MCF 10A (cell line): ENCODE measurements at regions of chr20 and their contacts with region 1.

Region 1: DNA sequence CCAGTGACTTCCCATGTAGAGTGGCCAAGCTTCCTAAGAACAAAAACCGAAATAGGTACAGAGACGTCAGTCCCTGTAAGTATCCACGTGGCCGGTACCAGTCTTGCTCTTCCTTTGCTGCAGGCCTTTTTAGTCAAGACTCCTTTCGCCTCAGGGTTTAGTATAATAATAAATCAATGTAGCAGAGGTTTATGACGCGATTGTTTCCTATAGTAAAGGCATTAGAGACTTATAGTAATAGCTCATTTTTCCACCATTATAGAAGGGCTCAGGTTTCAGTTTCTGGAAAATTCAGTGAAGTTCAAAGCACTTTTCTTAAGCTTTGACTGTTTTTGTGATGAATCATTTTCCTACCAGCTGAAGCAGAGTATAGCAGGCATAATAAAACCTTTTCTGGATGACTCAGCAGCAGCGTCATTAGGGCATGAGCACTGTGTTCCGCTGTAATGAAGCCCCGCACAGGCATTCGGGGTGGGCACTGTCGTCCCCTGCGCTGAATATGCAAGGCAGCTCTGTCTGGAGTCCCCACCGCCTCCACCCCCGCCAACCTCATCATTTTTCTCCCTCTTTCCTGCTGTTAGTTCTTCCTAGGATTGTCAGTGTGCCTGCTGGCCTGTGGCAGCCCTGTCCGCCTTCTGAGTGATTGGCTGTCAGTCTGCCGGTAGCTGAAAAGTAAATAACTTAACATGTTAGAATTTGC is 51.3 kb downstream of the PTPN1 start:
- DNase-seq: peak; percentile 89
- H3K4me3 Mint-ChIP-seq: peak overlapping the region; percentile 55
- H3K27ac Mint-ChIP-seq: peak overlapping the region; percentile 97
- H3K4me1 Mint-ChIP-seq: peaks cover 47% of the 10 kb centered on the region
- H3K27me3 Mint-ChIP-seq: no peaks in the 10 kb centered on the region
- CTCF ChIP-seq: no peak

Region 2: DNA sequence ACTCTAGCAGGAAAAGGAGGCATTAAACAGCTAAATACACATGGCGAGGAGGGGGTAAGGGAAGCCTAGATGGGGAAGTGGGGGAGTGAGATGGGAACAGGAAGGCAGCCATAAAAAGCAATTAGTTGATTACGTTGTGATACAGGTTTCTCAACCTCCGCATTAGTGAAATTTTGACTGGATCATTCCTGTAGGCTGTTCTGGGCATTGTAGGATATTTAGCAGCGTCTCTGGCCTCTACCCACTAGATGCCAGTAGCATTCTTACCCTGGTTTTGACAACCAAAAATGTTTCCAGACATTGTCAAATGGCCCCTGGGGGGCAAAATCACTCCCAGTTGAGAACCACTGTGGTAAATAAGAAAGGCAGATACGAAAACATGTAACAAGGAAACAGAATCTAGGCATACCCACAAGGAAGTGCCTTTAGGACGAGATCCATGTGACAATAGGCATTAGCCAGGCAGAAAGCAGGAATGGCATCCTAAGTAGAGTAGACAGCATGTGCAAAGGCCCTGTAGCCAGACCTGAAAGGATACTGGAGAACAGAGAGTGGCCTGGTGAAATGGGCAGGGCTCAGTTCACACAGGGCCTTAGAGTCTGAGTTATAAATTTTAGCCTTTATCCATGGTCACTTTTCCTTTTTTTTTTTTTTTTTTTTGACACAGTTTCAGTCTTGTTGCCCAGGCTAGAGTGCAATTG is 77.1 kb before region 1 on chr20:
- CTCF ChIA-PET with region 1: interaction called, 4 read pairs
- POLR2A ChIA-PET with region 1: interaction called, 32 read pairs
- intact Hi-C with region 1: no loop called
- DNase-seq: peak; percentile 30
- H3K4me3 Mint-ChIP-seq: peak overlapping the region; percentile 75
- H3K27ac Mint-ChIP-seq: peak overlapping the region; percentile 90
- H3K4me1 Mint-ChIP-seq: peaks cover 12% of the 10 kb centered on the region
- H3K27me3 Mint-ChIP-seq: no peaks in the 10 kb centered on the region
- CTCF ChIP-seq: peak; percentile 29

Region 3: GRCh38 chr20:50491926-50492634 is 69.4 kb before region 1 on chr20:
- CTCF ChIA-PET with region 1: interaction called, 4 read pairs
- POLR2A ChIA-PET with region 1: interaction called, 25 read pairs
- intact Hi-C with region 1: no loop called
- DNase-seq: peak; percentile 92
- H3K4me3 Mint-ChIP-seq: peak overlapping the region; percentile 60
- H3K27ac Mint-ChIP-seq: peak overlapping the region; percentile 92
- H3K4me1 Mint-ChIP-seq: peaks cover 39% of the 10 kb centered on the region
- H3K27me3 Mint-ChIP-seq: no peaks in the 10 kb centered on the region
- CTCF ChIP-seq: no peak

Region 4: DNA sequence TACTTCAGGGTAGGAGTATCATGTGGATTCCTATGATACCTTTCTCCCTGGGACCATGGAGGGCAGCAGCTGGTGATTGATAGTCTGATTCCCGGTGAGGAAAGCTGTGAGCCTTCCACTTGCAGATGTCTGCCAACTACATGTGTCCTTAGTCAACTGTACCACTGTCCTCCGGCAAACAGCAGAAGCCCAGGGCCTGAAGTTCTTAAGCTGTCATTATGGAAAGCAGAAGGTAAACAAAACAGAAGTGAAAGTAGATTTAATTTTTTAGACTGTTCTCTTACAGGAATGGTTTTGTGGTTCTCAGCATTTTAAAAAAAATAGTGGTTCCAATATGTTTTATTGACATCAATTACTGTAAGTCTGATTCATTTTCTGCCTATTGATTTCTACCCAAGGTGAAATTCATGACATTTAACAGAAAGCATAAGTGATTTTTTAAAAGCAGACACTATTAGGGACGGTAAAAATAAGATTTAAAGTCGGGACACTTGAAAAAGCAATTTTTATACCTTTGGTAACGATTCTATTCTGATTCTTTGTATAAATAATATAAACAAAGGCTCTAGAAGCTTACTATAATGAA is 14.7 kb before region 1 on chr20:
- CTCF ChIA-PET with region 1: interaction called, 6 read pairs
- POLR2A ChIA-PET with region 1: interaction called, 50 read pairs
- intact Hi-C with region 1: no loop called
- DNase-seq: no peak
- H3K4me3 Mint-ChIP-seq: no peak overlapping the region
- H3K27ac Mint-ChIP-seq: peak overlapping the region; percentile 41
- H3K4me1 Mint-ChIP-seq: peaks cover 31% of the 10 kb centered on the region
- H3K27me3 Mint-ChIP-seq: no peaks in the 10 kb centered on the region
- CTCF ChIP-seq: no peak

Region 5: DNA sequence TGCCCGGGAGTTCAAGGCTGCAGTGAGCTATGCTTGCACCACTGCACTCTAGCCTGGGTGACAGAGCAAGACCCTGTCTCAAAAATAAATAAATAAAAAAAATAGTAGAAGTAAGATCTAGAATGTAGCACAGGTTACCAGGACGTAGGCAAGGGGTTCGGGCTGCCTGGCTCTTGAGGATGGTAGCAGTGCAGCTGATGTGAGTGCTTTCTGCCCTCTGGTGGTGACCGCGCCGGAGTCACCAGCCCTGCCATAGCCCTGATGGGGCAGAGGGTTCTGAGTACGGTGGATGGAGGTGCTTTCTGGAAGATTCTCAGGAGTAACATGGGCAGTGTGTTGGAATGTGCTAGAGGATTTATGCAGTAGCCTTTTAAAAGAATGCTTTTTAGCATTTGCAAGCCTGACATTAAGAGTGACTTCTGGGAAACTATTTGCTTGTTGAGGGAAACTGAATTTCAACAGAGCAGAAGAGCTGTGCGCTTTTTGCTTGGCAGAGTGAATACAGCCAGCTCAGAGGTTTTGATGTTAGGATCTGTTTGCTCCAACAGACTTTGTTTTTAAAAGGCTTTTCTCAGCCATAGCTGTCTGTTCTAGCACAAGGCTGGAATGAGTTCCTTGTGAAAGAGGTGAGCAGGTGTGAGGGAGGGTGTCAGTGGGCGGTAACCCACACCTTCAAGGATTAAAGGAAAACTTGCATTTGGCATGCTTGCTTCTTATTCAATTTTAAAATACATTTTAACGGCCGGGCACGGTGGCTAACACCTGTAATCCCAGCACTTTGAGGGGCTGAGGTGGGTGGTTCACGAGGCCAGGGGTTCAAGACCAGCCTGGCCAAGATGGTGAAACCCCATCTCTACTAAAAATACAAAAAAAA is 14.6 kb after region 1 on chr20:
- CTCF ChIA-PET with region 1: interaction called, 24 read pairs
- POLR2A ChIA-PET with region 1: interaction called, 21 read pairs
- intact Hi-C with region 1: no loop called
- DNase-seq: peak; percentile 63
- H3K4me3 Mint-ChIP-seq: no peak overlapping the region
- H3K27ac Mint-ChIP-seq: no peak overlapping the region
- H3K4me1 Mint-ChIP-seq: peaks cover 21% of the 10 kb centered on the region
- H3K27me3 Mint-ChIP-seq: no peaks in the 10 kb centered on the region
- CTCF ChIP-seq: peak; percentile 56